Adrenal gland (tissue), 19 donors: ENCODE measurements at regions of chr5 and their contacts with region 1.

Region 1: GRCh38 chr5:105034397-105034754 is 1471.8 kb upstream of the NUDT12 start:
- DNase-seq: no peak
- H3K4me3 ChIP-seq: no peak overlapping the region
- H3K27ac ChIP-seq: no peak overlapping the region
- H3K4me1 ChIP-seq: no peaks in the 10 kb centered on the region
- H3K27me3 ChIP-seq: no peaks in the 10 kb centered on the region
- CTCF ChIP-seq: no peak
- POLR2A ChIP-seq: no peak

Region 2: DNA sequence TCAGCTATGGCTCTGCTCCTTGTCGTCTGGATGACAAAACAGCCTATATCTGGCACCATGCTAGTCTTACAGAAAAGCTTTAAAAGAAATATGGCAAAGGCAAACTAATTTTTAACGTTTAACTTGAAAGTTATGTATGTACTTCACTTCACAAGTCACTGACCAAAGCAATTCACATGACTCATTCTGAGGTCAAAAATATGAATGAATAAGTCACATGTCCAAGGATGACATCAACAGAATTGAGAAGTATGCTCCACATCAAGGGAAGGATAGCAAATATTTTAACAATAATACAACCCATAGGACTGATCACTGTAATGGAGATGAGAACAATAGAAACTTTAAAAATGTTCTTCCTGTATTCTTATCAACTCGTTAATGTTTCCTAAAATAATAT is 399.1 kb before region 1 on chr5:
- intact Hi-C with region 1: no loop called
- DNase-seq: no peak
- H3K4me3 ChIP-seq: no peak overlapping the region
- H3K27ac ChIP-seq: no peak overlapping the region
- H3K4me1 ChIP-seq: no peaks in the 10 kb centered on the region
- H3K27me3 ChIP-seq: no peaks in the 10 kb centered on the region
- CTCF ChIP-seq: no peak
- POLR2A ChIP-seq: no peak

Region 3: DNA sequence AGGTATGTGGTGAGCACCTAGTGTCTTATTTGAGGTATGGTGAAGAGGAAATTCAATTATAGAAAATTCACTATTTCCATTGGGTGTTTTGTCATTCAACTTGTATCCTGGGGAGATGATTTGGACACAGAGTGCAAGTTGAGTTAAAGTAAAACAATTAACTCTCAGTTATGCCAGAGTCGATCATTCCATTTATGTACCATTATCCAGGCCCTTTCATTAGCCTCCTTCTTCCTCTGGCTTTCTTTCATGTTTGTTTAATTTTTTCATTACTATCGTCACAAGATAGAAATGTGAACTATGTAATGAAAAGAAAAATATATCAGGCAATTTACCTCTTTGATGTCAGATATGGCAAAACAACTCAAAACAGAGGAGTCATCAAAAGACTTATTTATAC is 124.6 kb before region 1 on chr5:
- intact Hi-C with region 1: loop called in 1 of 2 experiments (anchors 5 kb)
- DNase-seq: no peak
- H3K4me3 ChIP-seq: no peak overlapping the region
- H3K27ac ChIP-seq: no peak overlapping the region
- H3K4me1 ChIP-seq: no peaks in the 10 kb centered on the region
- H3K27me3 ChIP-seq: no peaks in the 10 kb centered on the region
- CTCF ChIP-seq: no peak
- POLR2A ChIP-seq: no peak